ENCODE measurements at regions of chr14 and their contacts with region 1.

Region 1: GRCh38 chr14:35416108-35416750 is 11.7 kb upstream of the NFKBIA start:
- DNase-seq: no peak
- ATAC-seq: no peak
- H3K4me3 ChIP-seq: peak overlapping the region in 1 of 3 experiments; percentile 14; a peak in 1 of 6 replicates
- H3K27ac ChIP-seq: no peak overlapping the region
- H3K4me1 ChIP-seq: peaks cover 73% of the 10 kb centered on the region
- H3K27me3 ChIP-seq: peaks cover 4 to 12% of the 10 kb centered on the region in 2 experiments; a peak in 3 of 5 replicates
- CTCF ChIP-seq: no peak
- EP300 ChIP-seq: no peak
- POLR2A ChIP-seq: no peak
- RAD21 ChIP-seq: no peak

Region 2: DNA sequence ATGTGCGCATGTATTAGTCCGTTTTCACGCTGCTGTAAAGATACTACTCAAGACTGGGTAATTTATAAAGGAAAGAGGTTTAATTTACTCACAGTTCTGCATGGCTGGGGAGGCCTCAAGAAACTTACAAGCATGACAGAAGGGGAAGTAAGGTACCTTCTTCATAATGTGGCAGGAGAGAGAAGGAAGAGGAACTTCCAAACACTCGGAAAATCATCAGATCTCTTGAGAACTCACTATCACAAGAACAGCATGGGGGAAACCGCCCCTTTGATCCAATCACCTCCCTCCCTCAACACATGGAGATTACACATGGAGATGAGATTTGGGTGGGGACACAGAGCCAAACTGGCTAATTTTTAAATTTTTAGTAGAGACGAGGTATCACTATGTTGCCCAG is 744.5 kb before region 1 on chr14:
- CTCF ChIA-PET with region 1: interaction called, 3 read pairs
- POLR2A ChIA-PET with region 1: no interaction called
- in situ Hi-C with region 1: loop called (anchors 5 kb)
- intact Hi-C with region 1: loop called (anchors 2 kb)
- DNase-seq: no peak
- ATAC-seq: no peak
- H3K4me3 ChIP-seq: no peak overlapping the region
- H3K27ac ChIP-seq: no peak overlapping the region
- H3K4me1 ChIP-seq: peaks cover 14% of the 10 kb centered on the region
- H3K27me3 ChIP-seq: peaks cover 0 to 4% of the 10 kb centered on the region in 2 experiments; a peak in 1 of 5 replicates
- CTCF ChIP-seq: no peak
- EP300 ChIP-seq: no peak
- POLR2A ChIP-seq: no peak
- RAD21 ChIP-seq: no peak

Region 3: DNA sequence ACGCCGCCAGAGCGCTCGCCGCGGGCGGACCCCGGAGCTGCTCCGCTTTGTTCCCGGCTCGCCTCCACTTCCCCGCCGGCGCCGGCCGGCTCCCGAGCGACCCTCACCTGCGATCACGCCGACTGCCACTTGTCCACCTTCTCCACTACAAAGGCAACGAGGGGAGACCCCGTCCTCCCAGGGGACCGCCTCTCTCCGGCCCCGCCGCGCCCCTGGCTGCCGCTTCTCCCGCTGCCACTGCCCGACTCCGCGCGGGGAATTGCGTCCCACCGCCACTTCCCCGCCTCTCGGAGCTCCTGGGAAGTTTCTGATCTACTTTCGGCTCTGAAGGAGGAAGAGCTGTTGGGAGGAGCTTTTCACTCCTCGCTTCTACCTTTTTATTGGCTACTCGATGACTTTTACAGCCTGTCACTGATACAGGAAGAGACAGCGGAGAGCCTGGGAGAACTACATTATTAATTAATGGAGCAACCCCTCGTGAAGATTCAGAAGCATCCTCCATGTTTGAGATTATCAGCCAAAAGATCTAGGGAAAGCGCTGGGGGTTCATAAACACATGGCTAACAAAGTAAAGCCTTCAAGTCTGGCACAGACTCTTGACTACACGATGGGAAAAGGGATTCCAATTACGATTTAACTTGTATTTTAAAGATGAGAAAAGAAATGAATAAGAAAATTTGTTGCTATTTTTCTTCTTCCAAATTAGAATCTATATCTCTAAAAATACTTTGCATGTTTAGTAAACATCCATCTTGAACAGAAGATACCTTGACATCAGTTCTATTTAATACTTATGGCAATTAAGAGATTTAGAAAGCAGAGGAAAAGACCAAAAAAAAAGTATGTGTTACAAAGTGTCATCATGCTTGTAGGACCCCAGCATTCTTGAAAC is 541.0 kb before region 1 on chr14 and contains the start of gene BAZ1A:
- CTCF ChIA-PET with region 1: no interaction called
- POLR2A ChIA-PET with region 1: no interaction called
- in situ Hi-C with region 1: no loop called
- intact Hi-C with region 1: loop called (anchors 10 kb)
- DNase-seq: peak; percentile 93
- ATAC-seq: peak; percentile 46
- H3K4me3 ChIP-seq: peak within 1 kb of the TSS; percentile 82 to 89 (median 87)
- H3K27ac ChIP-seq: peak within 1 kb of the TSS; percentile 85
- H3K4me1 ChIP-seq: peaks cover 34% of the 10 kb centered on the region
- H3K27me3 ChIP-seq: no peaks in the 10 kb centered on the region; a peak in 1 of 5 replicates
- CTCF ChIP-seq: peak; percentile 37; the same call in 1 of the 2 replicates
- EP300 ChIP-seq: no peak
- POLR2A ChIP-seq: peak in 1 of 2 experiments; percentile 93; a peak in 2 of 4 replicates
- RAD21 ChIP-seq: no peak; the same call in none of the 2 replicates
- total RNA-seq, gene BAZ1A: 56.8 and 68.3 TPM in 2 replicates

Region 4: GRCh38 chr14:35020713-35021112 is 395.5 kb before region 1 on chr14:
- CTCF ChIA-PET with region 1: no interaction called
- POLR2A ChIA-PET with region 1: no interaction called
- in situ Hi-C with region 1: no loop called
- intact Hi-C with region 1: loop called (anchors 1 kb)
- DNase-seq: no peak
- ATAC-seq: no peak
- H3K4me3 ChIP-seq: no peak overlapping the region
- H3K27ac ChIP-seq: no peak overlapping the region
- H3K4me1 ChIP-seq: no peaks in the 10 kb centered on the region
- H3K27me3 ChIP-seq: no peaks in the 10 kb centered on the region
- CTCF ChIP-seq: no peak
- EP300 ChIP-seq: no peak
- POLR2A ChIP-seq: no peak
- RAD21 ChIP-seq: no peak

Region 5: GRCh38 chr14:35140718-35141581 is 275.3 kb before region 1 on chr14:
- CTCF ChIA-PET with region 1: interaction called, 91 read pairs
- POLR2A ChIA-PET with region 1: interaction called, 4 read pairs
- in situ Hi-C with region 1: no loop called
- intact Hi-C with region 1: loop called (anchors 1 kb)
- DNase-seq: peak; percentile 68
- ATAC-seq: no peak
- H3K4me3 ChIP-seq: no peak overlapping the region
- H3K27ac ChIP-seq: no peak overlapping the region
- H3K4me1 ChIP-seq: peaks cover 17% of the 10 kb centered on the region
- H3K27me3 ChIP-seq: no peaks in the 10 kb centered on the region
- CTCF ChIP-seq: peak; percentile 64
- EP300 ChIP-seq: no peak
- POLR2A ChIP-seq: no peak
- RAD21 ChIP-seq: peak; percentile 69

Region 6: GRCh38 chr14:35215110-35215876 is 200.9 kb before region 1 on chr14:
- CTCF ChIA-PET with region 1: interaction called, 4 read pairs
- POLR2A ChIA-PET with region 1: no interaction called
- in situ Hi-C with region 1: no loop called
- intact Hi-C with region 1: loop called (anchors 2 kb)
- DNase-seq: peak; percentile 57
- ATAC-seq: no peak; the same call in 2 of the 3 replicates
- H3K4me3 ChIP-seq: no peak overlapping the region
- H3K27ac ChIP-seq: no peak overlapping the region
- H3K4me1 ChIP-seq: peaks cover 25% of the 10 kb centered on the region
- H3K27me3 ChIP-seq: no peaks in the 10 kb centered on the region
- CTCF ChIP-seq: peak; percentile 68
- EP300 ChIP-seq: no peak
- POLR2A ChIP-seq: no peak
- RAD21 ChIP-seq: peak; percentile 46; the same call in 1 of the 2 replicates

Region 7: DNA sequence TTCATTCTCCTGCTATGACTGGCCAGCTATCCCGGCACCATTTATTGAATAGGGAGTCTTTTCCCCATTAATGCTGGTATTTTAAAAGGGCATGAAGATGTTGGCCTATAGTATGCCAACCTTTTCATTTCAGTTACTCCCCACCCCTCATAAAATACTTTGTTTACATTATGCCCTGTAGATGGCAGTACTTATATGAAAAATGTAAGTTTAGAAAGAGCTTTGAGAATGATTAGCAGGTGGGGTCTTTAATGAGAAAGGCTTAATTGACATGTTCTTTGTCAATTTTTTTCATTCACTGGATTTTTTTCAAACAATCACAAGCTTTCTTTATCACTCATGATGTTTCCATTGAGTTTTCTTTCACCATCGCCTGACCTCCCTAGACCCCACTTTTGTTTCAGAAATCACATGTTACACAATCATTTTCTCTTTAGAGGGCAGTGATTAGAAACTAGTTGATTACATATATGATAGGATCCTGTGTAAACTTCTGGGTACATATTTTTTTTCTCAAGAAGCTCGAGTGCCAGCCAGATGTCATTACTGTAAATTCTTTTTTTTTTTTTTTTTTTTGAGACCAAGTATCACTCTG is 186.6 kb before region 1 on chr14:
- CTCF ChIA-PET with region 1: interaction called, 10 read pairs
- POLR2A ChIA-PET with region 1: no interaction called
- in situ Hi-C with region 1: no loop called
- intact Hi-C with region 1: loop called (anchors 2 kb)
- DNase-seq: peak; percentile 49
- ATAC-seq: peak; percentile 66
- H3K4me3 ChIP-seq: no peak overlapping the region
- H3K27ac ChIP-seq: no peak overlapping the region
- H3K4me1 ChIP-seq: no peaks in the 10 kb centered on the region
- H3K27me3 ChIP-seq: no peaks in the 10 kb centered on the region
- CTCF ChIP-seq: peak; percentile 58
- EP300 ChIP-seq: no peak
- POLR2A ChIP-seq: no peak
- RAD21 ChIP-seq: 0 out of 2 replicates have a peak, but pooled peaks have one; percentile 20

Measured in HepG2 (cell line).